ENCODE measurements at regions of chr5 and their contacts with region 1.

Region 1: GRCh38 chr5:77030097-77031071 is at the start of gene AGGF1:
- DNase-seq: peak; percentile 97
- total RNA-seq, gene AGGF1: 16.9 TPM

Region 2: GRCh38 chr5:76888733-76889300 is 141.6 kb before region 1 on chr5:
- intact Hi-C with region 1: no loop called
- DNase-seq: no peak

Region 3: DNA sequence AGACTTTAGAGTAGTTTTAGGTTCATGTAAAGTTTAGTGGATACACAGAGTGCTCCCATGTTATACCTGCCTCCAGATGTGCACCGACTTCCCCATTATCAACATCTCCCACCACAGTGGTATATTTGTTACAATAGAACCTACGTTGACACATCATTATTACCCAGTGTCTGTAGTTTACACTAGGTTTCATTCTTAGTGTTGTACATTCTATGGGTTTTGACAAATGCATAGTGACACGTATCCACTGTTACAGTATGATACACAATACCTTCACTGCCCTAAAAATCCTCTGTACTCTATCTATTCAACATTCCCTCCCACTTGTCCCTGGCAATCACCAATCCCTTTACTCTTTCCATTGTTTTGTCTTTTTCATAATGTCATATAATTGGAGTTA is 111.8 kb before region 1 on chr5:
- intact Hi-C with region 1: no loop called
- DNase-seq: no peak

Region 4: GRCh38 chr5:76930083-76930482 is 100.3 kb before region 1 on chr5:
- intact Hi-C with region 1: no loop called
- DNase-seq: no peak

Region 5: DNA sequence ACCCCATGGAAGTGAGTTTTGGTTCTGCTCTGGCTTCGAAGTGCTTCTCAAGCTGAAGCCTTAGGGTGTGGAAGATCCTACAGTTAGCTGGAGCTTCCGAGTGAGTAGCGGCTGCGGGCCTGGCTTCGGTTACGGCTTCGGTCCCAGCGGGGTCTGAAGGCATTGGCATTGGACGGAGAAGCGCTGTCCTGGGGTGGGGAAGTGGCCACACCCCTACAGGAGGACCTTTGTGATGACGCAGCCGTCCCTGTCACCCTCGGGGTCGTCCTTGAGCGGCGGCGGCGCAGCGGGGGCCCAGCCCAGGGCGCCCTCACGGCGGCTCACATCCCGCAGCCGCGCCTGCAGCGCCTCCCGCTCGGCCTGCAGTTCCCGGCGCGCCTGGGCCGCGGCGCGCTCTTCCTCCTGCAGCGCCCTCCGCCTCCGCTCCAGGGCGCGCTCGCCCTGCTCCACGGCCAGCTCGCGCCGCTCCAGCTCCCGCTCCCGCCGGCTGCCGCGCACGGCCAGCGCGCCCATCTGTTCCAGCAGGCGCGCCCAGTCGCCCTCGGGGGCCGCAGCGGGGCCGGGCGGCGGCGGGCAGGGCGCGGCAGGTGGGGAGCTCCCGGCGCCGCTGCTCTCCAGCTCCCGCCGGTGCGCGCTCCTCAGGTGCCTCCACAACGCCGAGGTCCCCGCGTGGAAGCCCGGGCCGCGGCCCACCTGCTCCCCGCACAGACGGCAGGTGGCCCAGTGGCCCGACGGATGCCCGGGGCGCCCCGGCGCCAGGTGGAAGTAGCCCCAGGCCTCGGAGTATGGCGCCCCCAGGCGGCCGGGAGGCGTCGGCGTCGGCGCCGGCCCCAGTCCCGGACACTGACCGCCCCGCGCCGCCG is 46.8 kb after region 1 on chr5:
- intact Hi-C with region 1: loop called (anchors 2 kb)
- DNase-seq: peak; percentile 92